Gastrocnemius medialis (tissue), 4 donors: ENCODE measurements at regions of chr2 and their contacts with region 1.

Region 1: GRCh38 chr2:98009887-98010760 is 14.4 kb upstream of the TMEM131 start:
- DNase-seq: peak; percentile 35 to 74
- ATAC-seq: peak; percentile 77 to 88
- H3K4me3 ChIP-seq: no peak overlapping the region
- H3K27ac ChIP-seq: peak overlapping the region; percentile 89 to 92 (median 90)
- H3K4me1 ChIP-seq: peaks cover 20 to 23% of the 10 kb centered on the region in 2 donors
- H3K27me3 ChIP-seq: no peaks in the 10 kb centered on the region
- CTCF ChIP-seq: no peak
- POLR2A ChIP-seq: no peak

Region 2: GRCh38 chr2:97988722-97989121 is 21.4 kb before region 1 on chr2:
- in situ Hi-C with region 1: no loop called
- intact Hi-C with region 1: loop called (anchors 2 kb)
- DNase-seq: no peak
- ATAC-seq: peak in 1 of 2 donors; percentile 67
- H3K4me3 ChIP-seq: no peak overlapping the region
- H3K27ac ChIP-seq: peak overlapping the region; percentile 9 to 52 (median 44)
- H3K4me1 ChIP-seq: peaks cover 67 to 74% of the 10 kb centered on the region in 2 donors
- H3K27me3 ChIP-seq: no peaks in the 10 kb centered on the region
- CTCF ChIP-seq: no peak
- POLR2A ChIP-seq: no peak